IMR-90 (cell line): ENCODE measurements at regions of chr2 and their contacts with region 1.

Region 1: DNA sequence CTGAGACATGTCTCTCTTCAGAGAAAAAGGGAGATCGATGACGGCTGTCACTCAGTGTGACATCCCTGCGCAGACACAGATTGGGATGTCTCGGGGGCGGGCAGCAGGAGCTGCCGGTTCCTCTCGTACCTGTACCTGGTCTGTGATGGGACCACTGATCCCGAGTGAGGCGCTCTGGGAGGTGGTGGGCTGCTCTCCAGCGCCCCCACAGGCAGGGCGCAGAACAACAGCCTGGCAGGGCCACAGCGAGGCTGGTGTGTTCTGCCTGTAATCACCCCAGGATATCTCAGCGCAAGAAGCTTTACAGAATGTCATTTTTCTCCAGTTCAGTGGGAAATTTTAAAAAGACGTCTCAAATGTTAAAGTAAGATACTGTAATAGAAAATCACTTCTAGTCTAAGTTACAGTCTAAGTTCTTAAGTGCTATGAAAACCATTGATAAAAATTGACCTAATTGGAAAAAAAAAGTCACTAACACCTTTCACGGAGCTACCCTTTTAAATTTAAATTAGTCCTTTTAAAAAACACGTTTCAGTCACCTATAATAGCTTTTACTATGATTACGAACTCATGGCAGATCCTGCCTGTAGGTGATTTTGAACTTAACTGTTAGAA is 189.8 kb downstream of the SNTG2 start:
- DNase-seq: no peak
- ATAC-seq: peak; percentile 60
- H3K4me3 ChIP-seq: no peak overlapping the region
- H3K27ac ChIP-seq: no peak overlapping the region
- H3K4me1 ChIP-seq: no peaks in the 10 kb centered on the region
- H3K27me3 ChIP-seq: no peaks in the 10 kb centered on the region
- CTCF ChIP-seq: peak; percentile 60
- POLR2A ChIP-seq: no peak
- RAD21 ChIP-seq: peak; percentile 57

Region 2: DNA sequence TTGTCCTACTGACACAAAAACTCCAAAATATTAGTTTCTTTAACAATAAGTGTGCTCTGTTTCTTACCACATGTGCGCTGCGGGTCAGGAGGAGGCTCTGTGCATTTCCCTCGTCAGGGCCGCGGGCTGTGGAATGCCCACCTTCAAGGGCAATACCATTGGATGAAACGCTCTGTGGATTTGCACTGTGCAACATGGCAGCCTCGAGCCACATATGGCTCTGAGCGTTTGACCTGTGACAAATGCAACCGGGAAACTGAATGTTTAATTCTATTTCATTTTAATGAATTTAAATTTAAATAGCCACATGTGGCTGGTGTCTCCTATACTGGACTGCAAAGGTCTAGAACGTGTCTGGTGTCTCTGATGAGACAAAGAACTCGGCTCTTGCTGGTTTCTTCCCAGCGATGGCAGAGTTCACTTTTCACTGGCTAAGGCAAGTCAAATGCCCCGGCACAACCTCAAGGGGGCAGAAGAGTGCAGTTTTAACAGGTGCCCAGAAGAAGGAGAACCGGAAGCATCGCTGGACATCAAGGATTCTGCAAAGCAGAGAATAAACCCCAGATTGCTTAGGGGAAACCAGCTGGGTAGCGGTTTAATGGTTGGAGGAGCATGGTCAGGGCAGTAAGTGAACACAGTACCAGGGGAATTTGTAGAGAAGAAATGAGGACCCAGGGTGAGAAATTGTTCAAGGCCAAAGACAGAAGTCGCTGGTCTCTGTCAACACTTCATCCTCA is 426.3 kb before region 1 on chr2:
- CTCF ChIA-PET with region 1: interaction called, 3 read pairs
- POLR2A ChIA-PET with region 1: no interaction called
- dilution Hi-C with region 1: no loop called
- in situ Hi-C with region 1: no loop called
- intact Hi-C with region 1: loop called (anchors 1 kb)
- DNase-seq: peak; percentile 54
- ATAC-seq: peak; percentile 74; the same call in 1 of the 2 replicates
- H3K4me3 ChIP-seq: no peak overlapping the region
- H3K27ac ChIP-seq: no peak overlapping the region
- H3K4me1 ChIP-seq: no peaks in the 10 kb centered on the region
- H3K27me3 ChIP-seq: peaks cover 2% of the 10 kb centered on the region; the same call in 1 of the 2 replicates
- CTCF ChIP-seq: peak; percentile 66
- POLR2A ChIP-seq: no peak
- RAD21 ChIP-seq: peak; percentile 70

Region 3: GRCh38 chr2:1183294-1183693 is 42.8 kb after region 1 on chr2:
- CTCF ChIA-PET with region 1: no interaction called
- POLR2A ChIA-PET with region 1: no interaction called
- dilution Hi-C with region 1: no loop called
- in situ Hi-C with region 1: no loop called
- intact Hi-C with region 1: no loop called
- DNase-seq: no peak
- ATAC-seq: no peak
- H3K4me3 ChIP-seq: no peak overlapping the region
- H3K27ac ChIP-seq: no peak overlapping the region
- H3K4me1 ChIP-seq: no peaks in the 10 kb centered on the region
- H3K27me3 ChIP-seq: no peaks in the 10 kb centered on the region
- CTCF ChIP-seq: no peak
- POLR2A ChIP-seq: no peak
- RAD21 ChIP-seq: no peak

Region 4: DNA sequence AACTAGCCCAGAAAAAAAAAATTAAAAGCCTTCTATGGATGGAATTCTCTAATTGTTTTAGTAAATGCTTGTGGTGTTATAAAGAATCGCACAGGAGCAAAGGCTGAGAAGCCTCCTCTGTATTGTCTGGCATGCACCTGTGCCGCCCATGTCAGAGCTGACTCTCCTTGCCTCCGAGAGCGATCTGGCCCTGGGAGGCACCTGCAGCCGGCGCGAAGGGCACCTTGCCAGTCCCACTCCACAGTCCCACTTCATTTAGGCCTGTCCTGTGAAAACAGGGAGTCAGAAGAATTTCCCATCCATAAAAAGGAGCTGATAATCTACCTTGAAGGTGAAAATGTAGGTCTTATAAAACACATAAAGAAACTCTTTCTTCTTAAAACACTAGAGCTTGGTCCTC is 774.7 kb after region 1 on chr2:
- CTCF ChIA-PET with region 1: interaction called, 12 read pairs
- POLR2A ChIA-PET with region 1: no interaction called
- dilution Hi-C with region 1: no loop called
- in situ Hi-C with region 1: no loop called
- intact Hi-C with region 1: no loop called
- DNase-seq: no peak
- ATAC-seq: no peak
- H3K4me3 ChIP-seq: no peak overlapping the region
- H3K27ac ChIP-seq: no peak overlapping the region
- H3K4me1 ChIP-seq: no peaks in the 10 kb centered on the region
- H3K27me3 ChIP-seq: no peaks in the 10 kb centered on the region
- CTCF ChIP-seq: no peak
- POLR2A ChIP-seq: no peak
- RAD21 ChIP-seq: no peak